ENCODE measurements at regions of chr15 and their contacts with region 1.

Region 1: DNA sequence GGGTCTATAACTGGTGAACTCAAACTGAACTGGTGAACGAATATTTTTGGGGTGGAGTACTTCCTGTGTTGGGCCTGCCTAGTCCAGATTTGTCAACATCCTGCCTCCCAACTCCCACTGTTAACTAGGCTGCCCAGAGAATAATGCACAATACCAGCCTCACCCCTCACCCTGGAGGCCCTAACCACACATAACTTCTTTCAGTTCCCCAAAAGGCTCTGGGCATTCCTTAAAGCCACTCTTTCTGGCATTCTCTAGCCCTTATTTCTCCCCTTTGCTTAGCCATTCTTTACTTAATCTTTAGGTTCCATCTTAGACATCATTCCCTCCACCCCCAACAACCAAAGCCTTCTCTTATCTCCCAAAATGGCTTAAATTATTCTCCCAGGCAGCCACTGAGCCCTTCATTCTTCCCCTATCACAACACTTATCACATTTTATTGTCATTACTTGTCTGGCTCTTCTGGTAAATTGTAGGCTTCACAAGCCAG is 9.1 kb upstream of the SEC11A start:
- DNase-seq: no peak
- ATAC-seq: peak; percentile 71
- H3K4me3 Mint-ChIP-seq: peak overlapping the region; percentile 7
- H3K27ac Mint-ChIP-seq: peak overlapping the region; percentile 84
- H3K4me1 Mint-ChIP-seq: peaks cover 25% of the 10 kb centered on the region
- H3K27me3 Mint-ChIP-seq: no peaks in the 10 kb centered on the region

Region 2: GRCh38 chr15:84748274-84749110 is 23.4 kb after region 1 on chr15 and contains the start of gene ZNF592:
- POLR2A ChIA-PET with region 1: interaction called, 21 read pairs
- DNase-seq: peak; percentile 91
- ATAC-seq: peak; percentile 62
- H3K4me3 Mint-ChIP-seq: peak within 1 kb of the TSS; percentile 97
- H3K27ac Mint-ChIP-seq: peak within 1 kb of the TSS; percentile 96
- H3K4me1 Mint-ChIP-seq: peaks cover 53% of the 10 kb centered on the region
- H3K27me3 Mint-ChIP-seq: no peaks in the 10 kb centered on the region
- total RNA-seq, gene ZNF592: 35.6 TPM

Measured in activated naive CD8-positive, alpha-beta T cell treated with anti-CD3 and anti-CD28 coated beads, Interleukin-2, amount 10 ng/mL, durations not matched to agents 7 days and 5 days (primary cell).